K562 (cell line): ENCODE measurements at regions of chr3 and their contacts with region 1.

Region 1: GRCh38 chr3:39990532-39990931 is 181.1 kb downstream of the MYRIP start:
- DNase-seq: peak; percentile 70 to 76 (median 72)
- ATAC-seq: peak; percentile 90
- H3K4me3 ChIP-seq: no peak overlapping the region
- H3K27ac ChIP-seq: no peak overlapping the region
- H3K4me1 ChIP-seq: no peaks in the 10 kb centered on the region
- H3K27me3 ChIP-seq: no peaks in the 10 kb centered on the region
- CTCF ChIP-seq: peak; percentile 71 to 82 (median 72)
- EP300 ChIP-seq: no peak
- POLR2A ChIP-seq: no peak
- RAD21 ChIP-seq: peak; percentile 74 to 91

Region 2: DNA sequence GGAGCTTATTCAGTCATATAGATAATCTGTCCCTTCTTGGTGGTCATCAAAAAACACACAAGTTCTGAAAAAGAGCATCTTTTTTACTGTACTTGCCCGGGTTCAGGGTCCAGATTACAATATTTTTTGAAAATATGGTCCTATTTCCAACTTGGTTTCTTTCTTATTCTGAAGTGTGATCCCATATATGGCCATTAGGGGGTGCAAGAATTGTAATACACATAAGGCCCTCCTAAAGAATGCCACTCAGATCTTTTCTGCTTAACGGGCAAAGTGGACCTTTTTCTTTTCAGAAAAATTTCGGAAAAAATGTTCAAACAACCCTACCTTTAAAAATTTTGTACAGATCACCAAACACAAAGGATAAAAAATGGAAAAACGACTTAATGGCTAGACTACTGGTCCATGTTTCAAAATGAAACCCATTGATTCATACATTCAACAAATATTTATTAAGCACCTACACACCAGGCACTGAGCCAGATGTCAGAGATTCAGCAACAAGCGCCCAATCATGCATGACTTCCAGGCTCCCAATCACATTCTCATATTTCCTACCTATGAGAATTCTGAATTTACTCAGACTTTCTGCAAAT is 283.1 kb before region 1 on chr3:
- CTCF ChIA-PET with region 1: no interaction called
- POLR2A ChIA-PET with region 1: no interaction called
- in situ Hi-C with region 1: no loop called
- intact Hi-C with region 1: loop called (anchors 2 kb)
- DNase-seq: peak; percentile 46 to 55 (median 52)
- ATAC-seq: peak; percentile 79
- H3K4me3 ChIP-seq: no peak overlapping the region
- H3K27ac ChIP-seq: no peak overlapping the region
- H3K4me1 ChIP-seq: no peaks in the 10 kb centered on the region
- H3K27me3 ChIP-seq: no peaks in the 10 kb centered on the region
- CTCF ChIP-seq: peak; percentile 52 to 70 (median 59); a peak in 5 of 6 replicates
- EP300 ChIP-seq: no peak
- POLR2A ChIP-seq: no peak
- RAD21 ChIP-seq: peak; percentile 16 to 64; a peak in 3 of 4 replicates

Region 3: GRCh38 chr3:39724233-39724846 is 266.2 kb before region 1 on chr3:
- CTCF ChIA-PET with region 1: no interaction called
- POLR2A ChIA-PET with region 1: no interaction called
- in situ Hi-C with region 1: no loop called
- intact Hi-C with region 1: loop called (anchors 2 kb)
- DNase-seq: peak in 2 of 4 experiments; percentile 8 to 15
- ATAC-seq: peak; percentile 71
- H3K4me3 ChIP-seq: no peak overlapping the region
- H3K27ac ChIP-seq: no peak overlapping the region
- H3K4me1 ChIP-seq: no peaks in the 10 kb centered on the region
- H3K27me3 ChIP-seq: no peaks in the 10 kb centered on the region; a peak in 1 of 5 replicates
- CTCF ChIP-seq: peak; percentile 31 to 59 (median 37); a peak in 3 of 6 replicates
- EP300 ChIP-seq: no peak
- POLR2A ChIP-seq: no peak
- RAD21 ChIP-seq: peak; percentile 55 to 63

Region 4: GRCh38 chr3:39812537-39812936 is 178.0 kb before region 1 on chr3:
- CTCF ChIA-PET with region 1: interaction called, 3 read pairs
- POLR2A ChIA-PET with region 1: no interaction called
- in situ Hi-C with region 1: no loop called
- intact Hi-C with region 1: loop called (anchors 10 kb)
- DNase-seq: peak in 1 of 4 experiments; percentile 12
- ATAC-seq: no peak
- H3K4me3 ChIP-seq: no peak overlapping the region
- H3K27ac ChIP-seq: no peak overlapping the region
- H3K4me1 ChIP-seq: peaks cover 0 to 15% of the 10 kb centered on the region in 2 experiments; a peak in 2 of 5 replicates
- H3K27me3 ChIP-seq: peaks cover 2 to 29% of the 10 kb centered on the region in 2 experiments; a peak in 3 of 5 replicates
- CTCF ChIP-seq: peak in 2 of 3 experiments; percentile 44 to 47; a peak in 4 of 6 replicates
- EP300 ChIP-seq: no peak
- POLR2A ChIP-seq: no peak
- RAD21 ChIP-seq: peak in 1 of 2 experiments; percentile 30; a peak in 2 of 4 replicates

Region 5: DNA sequence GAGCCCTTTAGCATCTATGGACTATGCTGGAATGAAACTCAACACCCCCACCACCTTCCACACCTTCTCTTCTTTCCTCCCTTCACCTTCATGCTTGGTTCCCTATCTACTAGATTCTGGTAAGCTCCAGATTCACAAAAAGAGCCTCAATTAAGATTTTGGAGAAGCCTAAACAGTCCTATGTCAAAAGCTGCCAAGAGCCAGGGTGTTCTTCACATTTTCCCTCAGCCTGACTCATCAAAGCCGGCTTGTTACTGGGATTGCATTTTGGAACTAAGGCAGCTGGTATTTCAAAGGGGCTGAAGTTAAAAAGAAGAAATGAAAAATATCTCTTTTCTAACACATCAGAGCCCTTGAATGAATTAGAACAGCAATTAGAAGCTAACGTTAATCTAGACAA is 66.5 kb after region 1 on chr3:
- CTCF ChIA-PET with region 1: no interaction called
- POLR2A ChIA-PET with region 1: no interaction called
- in situ Hi-C with region 1: no loop called
- intact Hi-C with region 1: no loop called
- DNase-seq: no peak
- ATAC-seq: no peak
- H3K4me3 ChIP-seq: no peak overlapping the region
- H3K27ac ChIP-seq: no peak overlapping the region
- H3K4me1 ChIP-seq: no peaks in the 10 kb centered on the region
- H3K27me3 ChIP-seq: no peaks in the 10 kb centered on the region
- CTCF ChIP-seq: no peak
- EP300 ChIP-seq: no peak
- POLR2A ChIP-seq: no peak
- RAD21 ChIP-seq: no peak